RWPE1 (cell line): ENCODE measurements at regions of chr9 and their contacts with region 1.

Region 1: DNA sequence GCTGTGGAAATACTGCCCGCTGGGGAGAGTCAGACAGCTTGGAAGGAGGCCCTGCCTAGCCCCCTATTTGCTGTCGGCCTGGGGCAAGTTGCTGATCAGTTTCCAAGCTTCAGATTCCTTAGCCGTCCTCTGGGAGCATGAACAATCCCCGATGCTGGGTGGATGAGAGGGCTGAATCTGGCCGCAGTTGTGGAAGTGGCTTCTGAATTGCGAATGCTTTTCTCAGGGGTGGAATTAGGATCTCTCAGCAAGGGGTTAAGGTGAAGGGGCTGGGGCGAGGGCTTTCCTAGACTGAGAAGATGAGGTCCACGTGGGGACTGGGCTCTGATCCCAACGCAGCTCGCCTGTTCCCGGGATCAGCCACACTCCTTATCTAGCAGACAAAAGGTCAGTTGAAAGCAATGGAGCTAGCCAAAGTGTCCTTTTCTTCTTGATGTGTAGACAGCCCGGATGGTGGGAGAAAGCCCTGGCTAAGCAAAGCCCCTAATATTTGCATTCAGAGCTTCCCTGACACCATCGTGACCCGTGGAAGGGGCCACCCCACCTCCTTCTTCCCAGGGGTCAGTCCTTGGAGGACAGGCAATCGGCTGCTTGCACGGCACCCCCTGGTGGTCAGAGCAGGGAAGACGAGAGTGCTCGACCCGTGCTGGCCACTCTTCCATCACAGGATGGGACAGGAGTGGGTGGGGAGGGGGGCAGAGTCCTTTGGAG is 54.9 kb downstream of the COL15A1 start:
- DNase-seq: peak; percentile 83
- H3K27ac ChIP-seq: no peak overlapping the region
- CTCF ChIP-seq: peak; percentile 87

Region 2: GRCh38 chr9:98860871-98861293 is 137.7 kb before region 1 on chr9:
- CTCF ChIA-PET with region 1: interaction called, 15 read pairs
- POLR2A ChIA-PET with region 1: no interaction called
- DNase-seq: peak; percentile 64
- H3K27ac ChIP-seq: no peak overlapping the region
- CTCF ChIP-seq: no peak; the same call in 1 of the 2 replicates